BJ (cell line): ENCODE measurements at regions of chr2 and their contacts with region 1.

Region 1: DNA sequence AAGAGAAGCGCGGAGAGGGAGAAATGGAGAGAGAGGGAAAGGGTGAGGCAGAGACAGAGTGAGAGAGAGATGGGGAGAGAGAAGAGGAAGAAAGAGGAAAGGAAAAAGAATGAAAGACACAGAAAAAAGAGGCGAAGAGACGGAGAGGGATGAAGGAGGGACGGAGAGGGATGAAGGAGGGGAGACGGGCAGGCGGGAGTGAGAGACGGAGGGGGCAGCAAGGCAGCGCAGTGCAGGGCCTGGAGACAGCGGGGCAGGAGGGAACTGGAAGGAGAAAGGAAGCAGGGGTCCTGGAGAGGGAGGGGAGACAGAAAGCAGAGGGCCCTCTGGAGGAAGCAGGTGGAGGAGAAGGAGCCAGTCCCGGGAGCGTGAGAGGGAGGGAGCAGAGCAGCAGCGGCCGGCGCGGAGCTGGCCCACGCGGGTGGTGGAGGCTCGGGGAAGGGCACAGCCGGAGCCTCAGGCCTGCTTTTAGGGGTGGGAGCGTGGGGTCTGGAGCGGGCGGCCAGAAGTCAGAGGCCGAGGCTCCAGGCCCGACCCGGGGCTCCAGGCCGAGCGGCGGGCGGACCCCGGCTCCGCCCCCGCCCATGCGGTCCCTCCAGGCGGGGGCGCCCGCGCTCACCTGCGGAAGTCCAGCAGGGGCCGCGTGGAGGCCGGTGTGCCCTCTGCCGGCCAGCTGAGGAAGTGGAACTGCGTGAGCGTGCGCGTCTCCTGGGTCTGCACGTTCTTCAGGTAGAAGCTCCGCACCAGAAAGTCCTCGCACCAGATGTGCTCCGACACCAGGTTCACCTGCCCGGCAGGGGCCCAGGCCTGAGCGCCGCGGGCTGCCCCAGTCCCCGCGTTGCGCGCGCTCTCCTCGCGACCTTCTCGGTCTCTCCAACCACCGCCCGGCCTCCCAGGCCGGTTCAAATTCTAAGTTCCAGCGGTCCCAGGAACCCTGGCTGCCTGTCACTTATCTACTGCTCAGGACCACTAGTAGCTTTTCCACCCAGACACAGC is 14.5 kb downstream of the PTPRN start:
- DNase-seq: no peak
- H3K4me3 ChIP-seq: peak overlapping the region; percentile 41
- H3K27me3 ChIP-seq: peaks cover 1% of the 10 kb centered on the region; the same call in 1 of the 2 replicates
- CTCF ChIP-seq: peak; percentile 92

Region 2: GRCh38 chr2:219171231-219171651 is 123.4 kb before region 1 on chr2:
- CTCF ChIA-PET with region 1: interaction called, 90 read pairs
- POLR2A ChIA-PET with region 1: no interaction called
- DNase-seq: peak; percentile 88
- H3K4me3 ChIP-seq: no peak overlapping the region
- H3K27me3 ChIP-seq: no peaks in the 10 kb centered on the region
- CTCF ChIP-seq: peak; percentile 78

Region 3: GRCh38 chr2:219218732-219219701 is 75.6 kb before region 1 on chr2 and contains the start of gene ABCB6:
- CTCF ChIA-PET with region 1: interaction called, 15 read pairs
- POLR2A ChIA-PET with region 1: no interaction called
- DNase-seq: peak; percentile 54
- H3K4me3 ChIP-seq: peak within 1 kb of the TSS; percentile 43
- H3K27me3 ChIP-seq: no peaks in the 10 kb centered on the region
- CTCF ChIP-seq: no peak
- polyA plus RNA-seq, gene ABCB6: 20.3 and 33.4 TPM in 2 replicates

Region 4: GRCh38 chr2:219253753-219254590 is 40.7 kb before region 1 on chr2 and contains the start of gene TUBA4A:
- CTCF ChIA-PET with region 1: interaction called, 24 read pairs
- POLR2A ChIA-PET with region 1: interaction called, 5 read pairs
- DNase-seq: no peak
- H3K4me3 ChIP-seq: peak within 1 kb of the TSS; percentile 52
- H3K27me3 ChIP-seq: peaks cover 5% of the 10 kb centered on the region
- CTCF ChIP-seq: peak; percentile 4; the same call in 1 of the 2 replicates
- polyA plus RNA-seq, gene TUBA4A: 16.8 and 23.0 TPM in 2 replicates

Region 5: DNA sequence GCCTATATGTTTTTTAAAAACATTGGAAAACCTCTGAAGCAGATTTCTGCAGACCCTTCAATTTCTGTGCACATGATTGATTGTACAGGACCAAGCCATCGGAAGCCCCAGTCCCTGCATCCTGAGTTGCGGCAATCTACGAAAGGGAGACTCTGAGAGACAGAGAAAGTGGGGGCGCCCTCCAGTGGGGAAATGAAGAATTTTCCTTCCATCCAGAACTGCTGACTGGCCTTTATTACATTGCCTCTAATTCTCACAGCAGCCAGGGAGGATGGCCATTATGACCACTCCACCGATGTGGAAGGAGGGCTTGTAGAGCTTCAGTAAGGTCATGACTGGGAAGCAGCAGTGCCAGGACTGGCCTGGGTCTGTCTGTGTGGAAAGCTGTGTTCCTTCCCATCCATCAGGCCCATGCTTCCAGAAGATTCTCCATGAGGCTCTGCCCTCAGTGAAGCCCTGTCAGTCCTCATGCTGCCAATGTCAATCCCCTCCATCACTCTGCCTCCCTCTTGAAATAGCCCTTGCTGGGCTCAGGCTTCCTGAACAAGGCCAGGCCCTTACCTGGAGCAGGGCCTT is 57.9 kb after region 1 on chr2:
- CTCF ChIA-PET with region 1: interaction called, 10 read pairs
- POLR2A ChIA-PET with region 1: no interaction called
- DNase-seq: no peak
- H3K4me3 ChIP-seq: no peak overlapping the region
- H3K27me3 ChIP-seq: peaks cover 3% of the 10 kb centered on the region
- CTCF ChIP-seq: peak; percentile 72

Region 6: DNA sequence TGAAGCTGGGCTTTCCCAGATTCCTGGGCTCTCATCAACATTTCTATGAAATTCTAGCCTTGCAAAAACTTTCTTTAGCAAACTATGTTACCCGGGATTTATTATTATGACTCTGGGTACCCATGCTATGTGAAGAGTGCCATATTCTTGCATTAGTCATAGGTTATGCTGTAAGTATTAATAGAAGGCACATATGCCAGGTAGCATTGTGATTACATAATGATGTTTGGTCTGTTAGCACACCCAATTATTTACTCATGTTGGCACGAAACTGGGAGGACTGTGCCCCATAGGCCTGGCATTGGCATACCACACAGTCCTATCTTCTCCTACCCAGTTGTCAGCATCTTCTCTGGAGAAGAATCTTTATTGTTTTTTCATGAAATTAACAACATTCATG is 503.8 kb after region 1 on chr2:
- CTCF ChIA-PET with region 1: no interaction called
- POLR2A ChIA-PET with region 1: no interaction called
- DNase-seq: no peak
- H3K4me3 ChIP-seq: no peak overlapping the region
- H3K27me3 ChIP-seq: no peaks in the 10 kb centered on the region
- CTCF ChIP-seq: no peak